ENCODE measurements at regions of chr7 and their contacts with region 1.

Region 1: DNA sequence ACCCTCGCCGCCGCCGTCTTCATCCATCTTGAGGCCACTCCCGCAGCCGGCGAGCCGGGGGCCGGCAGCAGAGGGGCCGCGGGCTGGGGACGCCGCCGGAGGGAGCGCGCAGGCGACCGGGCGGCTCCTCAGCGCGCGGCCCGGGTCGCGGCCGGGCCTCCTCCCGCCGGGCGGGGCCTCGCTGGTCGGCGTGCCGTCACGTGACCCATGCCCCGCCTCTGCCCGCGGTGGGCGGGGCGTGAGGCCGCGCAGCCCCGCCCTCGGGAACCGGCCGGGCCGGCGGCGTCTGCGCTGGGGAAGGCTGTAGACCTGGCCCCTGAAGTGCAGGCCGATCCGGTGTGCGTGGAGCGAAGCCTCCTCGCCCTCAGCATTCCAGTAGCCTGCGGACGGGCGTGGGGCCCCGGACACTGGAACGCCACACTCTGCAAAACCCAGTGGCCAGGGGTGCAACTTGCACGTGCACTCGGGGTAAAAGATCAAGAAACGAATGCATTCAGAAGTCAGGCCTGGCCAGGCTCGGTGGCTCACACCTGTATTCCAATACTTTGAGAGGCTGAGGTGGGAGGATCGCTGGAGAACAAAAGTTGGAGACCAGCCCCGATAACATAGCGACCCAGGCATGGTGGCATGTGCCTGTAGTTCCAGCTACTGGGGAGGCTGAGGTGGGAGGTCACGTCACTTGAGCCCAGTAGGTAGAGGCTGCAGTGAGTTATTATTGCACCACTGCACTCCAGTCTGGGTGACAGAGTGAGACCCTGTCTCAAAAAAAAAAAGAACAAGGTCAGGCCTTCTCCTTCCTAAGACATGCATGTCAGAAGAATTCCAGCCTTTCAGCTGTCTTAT is at the start of gene CYTH3:
- DNase-seq: peak; percentile 81
- ATAC-seq: peak; percentile 96 to 97
- total RNA-seq, gene CYTH3: 26.4 to 30.2 TPM

Region 2: GRCh38 chr7:6160191-6160623 is 112.5 kb before region 1 on chr7:
- intact Hi-C with region 1: loop called in 1 of 2 experiments (anchors 5 kb)
- DNase-seq: peak; percentile 77
- ATAC-seq: peak; percentile 75 to 78

Region 3: DNA sequence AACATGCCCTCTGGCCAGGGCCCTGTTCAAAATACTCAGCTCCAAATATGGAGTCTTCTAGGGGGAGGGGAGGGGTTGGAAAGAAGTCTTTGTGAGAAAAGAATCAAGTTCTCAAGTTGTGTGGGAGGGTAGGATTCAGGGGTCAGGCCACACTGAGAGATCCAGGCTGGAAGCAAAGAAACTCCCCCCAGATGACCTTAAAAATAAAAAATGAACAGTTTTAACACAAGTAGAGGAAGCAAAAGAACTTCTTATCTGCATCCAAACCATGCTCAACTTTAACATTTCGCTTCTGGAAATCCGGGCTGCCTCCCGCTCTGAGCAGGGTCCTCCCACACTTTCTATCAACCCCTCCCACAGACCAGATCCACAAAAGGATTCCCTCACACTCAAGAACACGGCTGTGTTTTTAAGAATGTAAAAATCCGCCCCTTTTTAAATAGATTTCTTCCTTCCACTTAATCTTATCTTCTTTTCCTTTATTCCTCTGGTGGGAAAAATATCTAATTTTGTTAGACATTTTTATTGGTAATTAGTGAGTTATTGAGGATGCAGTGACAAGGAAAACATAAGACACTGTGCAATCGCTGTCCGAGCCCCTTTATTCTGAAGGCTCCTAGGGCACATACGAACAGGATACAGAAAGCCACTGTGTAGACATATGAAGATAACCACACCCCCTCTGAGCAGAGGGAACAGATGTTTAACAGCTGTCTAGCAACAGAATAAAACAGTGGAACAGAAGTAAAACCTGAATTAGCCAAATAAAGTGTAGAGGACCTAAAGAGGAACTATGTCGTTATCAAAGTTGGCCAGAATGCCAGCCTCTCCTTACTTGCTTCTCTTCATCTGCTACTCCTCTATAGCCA is 44.1 kb before region 1 on chr7:
- intact Hi-C with region 1: loop called in 1 of 2 experiments (anchors 5 kb)
- DNase-seq: no peak
- ATAC-seq: peak; percentile 48 to 77

Region 4: DNA sequence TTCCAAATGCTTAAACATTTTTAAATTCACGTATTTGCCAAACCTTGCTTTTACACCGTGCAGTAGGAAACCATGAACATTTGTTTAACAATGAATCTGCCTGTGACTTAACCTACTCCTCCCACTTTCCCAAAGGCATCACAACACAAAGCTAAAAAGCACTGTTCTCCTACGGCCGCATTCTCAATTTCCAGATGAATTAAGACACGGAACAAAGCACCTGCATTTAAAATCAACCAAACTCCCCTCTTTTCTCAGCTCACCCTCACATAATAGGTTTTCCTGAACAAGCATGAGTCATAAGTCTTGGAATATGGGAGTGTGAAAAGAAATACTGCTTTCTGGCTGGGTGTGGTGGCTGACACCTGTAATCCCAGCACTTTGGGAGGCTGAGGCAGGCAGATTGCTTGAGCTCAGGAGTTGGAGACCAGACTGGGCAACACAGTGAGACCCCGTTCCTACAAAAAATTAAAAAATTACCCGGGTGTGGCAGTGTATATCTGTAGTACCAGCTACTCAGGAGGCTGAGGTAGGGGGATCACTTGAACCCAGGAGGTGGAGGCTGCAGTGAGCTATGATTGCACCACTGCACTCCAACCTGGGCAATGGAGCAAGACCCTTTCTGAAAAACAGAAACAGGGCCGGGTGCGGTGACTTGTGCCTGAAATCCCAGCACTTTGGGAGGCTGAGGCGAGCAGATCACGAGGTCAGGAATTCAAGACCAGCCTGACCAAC is 51.4 kb after region 1 on chr7:
- intact Hi-C with region 1: loop called in 1 of 2 experiments (anchors 10 kb)
- DNase-seq: no peak
- ATAC-seq: no peak

Measured in left cardiac atrium (tissue), 4 donors.